H1 (cell line): ENCODE measurements at regions of chr1 and their contacts with region 1.

Region 1: DNA sequence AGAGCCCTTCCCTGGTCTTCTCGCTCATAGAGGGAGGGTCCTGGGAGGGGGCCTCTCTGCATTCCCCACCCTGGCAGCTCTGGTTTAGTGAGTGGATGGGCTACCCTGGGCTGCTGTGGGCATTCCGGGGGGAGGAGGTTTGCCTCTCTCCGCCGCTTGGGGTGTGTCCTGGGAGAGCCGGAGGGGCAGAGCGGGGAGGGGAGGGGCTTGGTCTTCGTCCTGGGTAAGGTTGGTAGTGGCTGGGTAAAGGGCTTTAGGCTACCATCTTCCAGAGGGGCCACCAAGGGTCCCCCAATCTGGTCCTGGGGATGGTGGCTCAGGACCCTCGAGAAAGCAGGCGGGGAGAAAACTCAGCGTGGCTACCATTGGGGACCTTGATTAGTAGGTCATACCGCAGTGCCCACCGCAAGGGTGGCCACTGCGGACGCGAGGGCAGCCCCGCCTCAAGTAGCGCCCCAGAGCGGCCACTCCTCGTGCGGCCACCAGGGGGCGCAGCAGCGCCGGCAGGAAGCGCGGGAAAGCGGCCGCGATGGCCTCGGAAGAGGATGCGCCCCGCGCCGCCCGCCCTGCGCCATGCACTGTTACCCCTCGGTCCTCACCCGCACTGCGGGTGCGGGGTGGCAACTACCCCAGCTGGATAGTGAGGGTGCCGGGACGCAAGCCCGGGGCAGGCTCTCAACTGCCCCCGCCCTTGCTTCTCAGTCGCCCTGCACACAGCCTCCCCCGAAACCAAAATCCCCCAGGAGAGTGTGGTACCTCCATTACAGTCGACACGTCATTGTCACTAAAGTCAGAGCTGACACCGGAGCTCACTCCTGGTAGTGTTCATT is 44.1 kb upstream of the SLC25A33 start:
- DNase-seq: peak; percentile 38 to 91
- H3K4me3 ChIP-seq: peak overlapping the region in 3 of 4 experiments; percentile 28 to 55 (median 43); a peak in 6 of 8 replicates
- H3K27ac ChIP-seq: no peak overlapping the region
- H3K4me1 ChIP-seq: no peaks in the 10 kb centered on the region
- H3K27me3 ChIP-seq: peaks cover 3 to 16% (median 11%) of the 10 kb centered on the region in 4 experiments
- CTCF ChIP-seq: peak; percentile 88 to 98 (median 91)
- EP300 ChIP-seq: no peak
- POLR2A ChIP-seq: peak in 1 of 2 experiments; percentile 53; a peak in 2 of 3 replicates
- RAD21 ChIP-seq: peak; percentile 68 to 80

Region 2: DNA sequence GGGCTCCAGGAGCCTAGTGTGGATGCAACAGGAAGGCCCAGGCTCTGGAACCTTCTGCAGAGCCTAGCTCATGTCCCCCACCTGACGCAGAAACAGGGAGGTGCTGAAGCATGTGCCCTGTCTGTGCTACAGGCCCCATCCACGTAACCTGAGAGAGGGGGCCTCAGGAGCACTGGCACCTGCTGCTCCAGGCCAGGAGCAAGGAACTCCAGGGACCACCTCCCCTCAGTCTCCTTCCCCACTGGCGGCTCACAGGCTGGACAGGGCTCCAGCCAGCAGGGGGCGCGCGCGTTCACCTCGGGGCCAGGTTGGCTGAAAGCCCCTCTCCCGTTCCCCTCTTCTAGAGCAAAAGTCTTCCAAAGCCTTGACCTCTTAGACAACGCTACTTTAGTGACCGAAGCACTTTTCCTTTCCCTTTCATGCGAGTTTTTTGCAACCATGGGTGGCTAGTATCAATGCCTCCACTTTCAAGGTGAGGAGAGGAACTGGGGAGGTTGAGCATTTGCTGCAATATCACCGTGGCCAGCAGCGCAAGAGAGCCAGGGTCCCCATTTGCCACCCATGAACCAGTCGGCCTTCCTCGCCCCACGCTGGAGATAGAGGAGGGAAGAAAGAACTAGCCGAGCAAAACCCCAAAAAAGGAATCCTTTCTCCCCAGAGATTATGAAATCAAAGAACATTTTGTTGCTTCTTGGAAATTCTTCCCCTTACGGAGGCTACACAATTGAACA is 313.8 kb before region 1 on chr1:
- CTCF ChIA-PET with region 1: no interaction called
- POLR2A ChIA-PET with region 1: no interaction called
- DNase-seq: peak in 1 of 2 experiments; percentile 97
- H3K4me3 ChIP-seq: peak overlapping the region; percentile 54 to 87 (median 78)
- H3K27ac ChIP-seq: no peak overlapping the region
- H3K4me1 ChIP-seq: peaks cover 4 to 13% (median 7%) of the 10 kb centered on the region in 4 experiments; a peak in 6 of 7 replicates
- H3K27me3 ChIP-seq: peaks cover 0 to 23% (median 12%) of the 10 kb centered on the region in 4 experiments; a peak in 5 of 7 replicates
- CTCF ChIP-seq: peak; percentile 79 to 97 (median 88)
- EP300 ChIP-seq: no peak
- POLR2A ChIP-seq: no peak; a peak in 1 of 3 replicates
- RAD21 ChIP-seq: peak; percentile 38 to 58

Region 3: GRCh38 chr1:9249534-9250410 is 245.4 kb before region 1 on chr1:
- CTCF ChIA-PET with region 1: interaction called, 12 read pairs
- POLR2A ChIA-PET with region 1: no interaction called
- DNase-seq: peak in 1 of 2 experiments; percentile 87
- H3K4me3 ChIP-seq: no peak overlapping the region
- H3K27ac ChIP-seq: no peak overlapping the region; the same call in none of the 2 replicates
- H3K4me1 ChIP-seq: peaks cover 17 to 37% (median 30%) of the 10 kb centered on the region in 4 experiments
- H3K27me3 ChIP-seq: no peaks in the 10 kb centered on the region; a peak in 1 of 7 replicates
- CTCF ChIP-seq: peak; percentile 90 to 99 (median 98)
- EP300 ChIP-seq: no peak
- POLR2A ChIP-seq: no peak
- RAD21 ChIP-seq: peak; percentile 80 to 87

Region 4: GRCh38 chr1:9292361-9293240 is 202.5 kb before region 1 on chr1 and contains the start of gene SPSB1:
- CTCF ChIA-PET with region 1: interaction called, 92 read pairs
- POLR2A ChIA-PET with region 1: no interaction called
- DNase-seq: peak in 1 of 2 experiments; percentile 66
- H3K4me3 ChIP-seq: peak within 1 kb of the TSS; percentile 61 to 80 (median 66)
- H3K27ac ChIP-seq: no peak within 1 kb of the TSS
- H3K4me1 ChIP-seq: peaks cover 0 to 10% (median 5%) of the 10 kb centered on the region in 4 experiments; a peak in 4 of 7 replicates
- H3K27me3 ChIP-seq: peaks cover 0 to 21% (median 16%) of the 10 kb centered on the region in 4 experiments; a peak in 6 of 7 replicates
- CTCF ChIP-seq: no peak
- EP300 ChIP-seq: no peak
- POLR2A ChIP-seq: peak in 1 of 2 experiments; percentile 66; a peak in 1 of 3 replicates
- RAD21 ChIP-seq: no peak
- total RNA-seq, gene SPSB1: 4.0 and 5.3 TPM in 2 replicates

Region 5: DNA sequence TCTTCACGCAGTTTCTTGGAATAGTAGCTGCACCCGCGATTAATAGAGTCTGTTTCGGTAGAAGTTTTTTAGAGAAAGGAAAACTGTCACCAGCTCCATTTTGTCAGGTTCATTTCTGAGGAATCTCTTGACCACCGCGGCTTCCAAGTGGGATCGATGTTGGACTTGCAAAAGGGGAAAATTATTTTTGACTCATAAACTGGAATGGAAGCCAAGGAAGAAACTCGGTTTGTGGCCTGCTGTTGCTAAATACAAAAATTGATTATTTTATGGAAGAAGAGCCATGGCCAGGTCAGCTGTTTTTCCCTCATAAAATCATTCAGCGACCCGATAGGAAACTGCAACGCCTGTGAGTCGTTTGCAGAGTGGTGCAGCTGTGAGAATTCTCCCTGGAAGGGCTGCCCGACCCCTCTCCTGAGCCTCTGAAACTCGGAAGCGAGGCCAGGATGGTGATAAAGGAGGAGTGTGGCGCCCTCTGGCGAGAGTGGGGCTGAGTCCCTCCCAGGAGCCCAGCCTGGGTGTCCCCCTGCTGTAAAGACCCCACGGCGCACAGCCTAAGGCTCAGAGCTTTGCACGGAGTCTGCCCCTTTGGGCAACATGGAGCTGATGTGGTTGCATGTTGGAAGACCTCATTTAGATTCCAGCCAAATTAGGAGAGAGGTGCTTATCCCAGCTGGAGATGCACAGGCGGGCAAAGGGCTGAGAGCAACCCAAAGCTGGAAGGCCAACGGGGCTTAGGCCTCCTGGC is 39.5 kb before region 1 on chr1:
- CTCF ChIA-PET with region 1: interaction called, 60 read pairs
- POLR2A ChIA-PET with region 1: interaction called, 3 read pairs
- DNase-seq: peak; percentile 54 to 94
- H3K4me3 ChIP-seq: no peak overlapping the region
- H3K27ac ChIP-seq: no peak overlapping the region
- H3K4me1 ChIP-seq: no peaks in the 10 kb centered on the region; a peak in 1 of 7 replicates
- H3K27me3 ChIP-seq: peaks cover 0 to 3% (median 0%) of the 10 kb centered on the region in 4 experiments; a peak in 1 of 7 replicates
- CTCF ChIP-seq: peak; percentile 92 to 98 (median 97)
- EP300 ChIP-seq: no peak
- POLR2A ChIP-seq: no peak
- RAD21 ChIP-seq: peak; percentile 97 to 98

Region 6: GRCh38 chr1:9481048-9481447 is 14.1 kb before region 1 on chr1:
- CTCF ChIA-PET with region 1: interaction called, 12 read pairs
- POLR2A ChIA-PET with region 1: no interaction called
- DNase-seq: no peak
- H3K4me3 ChIP-seq: no peak overlapping the region
- H3K27ac ChIP-seq: no peak overlapping the region
- H3K4me1 ChIP-seq: no peaks in the 10 kb centered on the region
- H3K27me3 ChIP-seq: no peaks in the 10 kb centered on the region
- CTCF ChIP-seq: no peak
- EP300 ChIP-seq: no peak
- POLR2A ChIP-seq: no peak
- RAD21 ChIP-seq: no peak

Region 7: DNA sequence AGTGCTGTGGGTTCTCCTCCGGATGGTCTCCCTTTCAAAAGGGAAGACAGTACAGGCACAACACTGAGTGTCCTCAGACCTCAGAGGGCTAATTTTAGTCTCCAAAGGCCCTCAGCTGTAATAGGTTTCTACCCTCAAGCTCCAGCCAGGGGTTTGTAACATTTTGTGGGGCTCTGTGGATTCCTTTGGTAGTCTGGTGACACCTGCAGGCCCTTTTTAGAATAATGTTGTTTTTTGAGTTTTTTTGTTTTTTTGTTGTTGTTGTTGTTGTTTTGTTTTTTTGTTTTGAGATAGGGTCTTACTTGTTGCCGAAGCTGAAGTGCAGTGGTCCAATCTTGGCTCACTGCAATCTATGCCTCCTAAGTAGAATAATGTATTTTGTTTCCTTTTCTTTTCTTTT is 78.6 kb after region 1 on chr1:
- CTCF ChIA-PET with region 1: interaction called, 20 read pairs
- POLR2A ChIA-PET with region 1: no interaction called
- DNase-seq: no peak
- H3K4me3 ChIP-seq: no peak overlapping the region
- H3K27ac ChIP-seq: no peak overlapping the region
- H3K4me1 ChIP-seq: no peaks in the 10 kb centered on the region
- H3K27me3 ChIP-seq: no peaks in the 10 kb centered on the region
- CTCF ChIP-seq: peak in 2 of 3 experiments; percentile 34 to 51; a peak in 3 of 4 replicates
- EP300 ChIP-seq: no peak
- POLR2A ChIP-seq: no peak
- RAD21 ChIP-seq: peak; percentile 62 to 67